ENCODE measurements at regions of chr1 and their contacts with region 1.

Region 1: DNA sequence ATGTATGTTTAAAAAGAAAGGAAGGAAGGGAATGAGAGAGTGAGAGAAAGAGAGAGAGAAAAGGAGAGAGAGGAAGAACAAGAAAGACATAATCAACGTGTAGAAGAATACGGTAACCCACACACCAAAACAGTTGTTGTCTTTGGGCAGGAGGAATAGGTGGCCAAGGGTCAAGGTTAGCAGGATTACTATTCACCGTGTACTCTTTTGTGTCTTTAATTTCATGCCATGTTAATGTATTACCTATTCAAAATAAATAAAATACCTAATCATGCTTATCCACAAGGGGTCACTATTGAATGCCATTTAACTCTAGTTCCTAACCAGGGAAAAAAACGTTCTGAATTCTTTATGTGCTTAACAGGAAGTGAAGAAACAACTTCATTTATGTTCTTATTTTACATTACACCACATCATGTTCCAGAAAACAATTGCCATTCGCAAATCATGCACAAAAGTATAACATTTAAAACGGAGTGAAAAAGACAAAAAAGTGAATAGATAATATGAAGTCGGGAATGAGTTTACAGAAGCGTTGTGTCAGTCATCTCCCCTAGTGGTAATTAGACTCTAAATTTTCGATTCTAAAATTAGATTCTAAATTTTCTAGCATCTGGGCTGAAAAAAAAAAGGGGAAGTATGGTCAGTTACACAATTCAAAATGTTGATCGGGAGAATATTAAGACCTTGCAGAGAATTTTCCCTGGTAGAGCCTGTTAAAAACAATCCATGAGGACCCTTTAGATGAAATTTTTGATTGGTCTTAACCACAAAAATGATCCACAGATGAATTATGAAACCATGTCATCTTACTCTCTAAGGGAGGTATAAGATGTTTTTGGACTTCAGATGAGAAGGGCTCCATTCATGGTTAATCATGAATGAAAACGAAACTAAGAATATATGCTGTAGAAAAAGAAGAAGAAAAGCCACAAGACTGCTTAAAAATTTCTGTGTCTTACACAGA is 700 bp upstream of the KMO start:
- DNase-seq: peak; percentile 91
- ATAC-seq: peak; percentile 68
- H3K4me3 ChIP-seq: peak overlapping the region; percentile 58 to 98 (median 78)
- H3K4me3 Mint-ChIP-seq: peak overlapping the region; percentile 92
- H3K27ac ChIP-seq: peak overlapping the region; percentile 87 to 96
- H3K27ac Mint-ChIP-seq: peak overlapping the region; percentile 96
- H3K4me1 ChIP-seq: peaks cover 29 to 41% of the 10 kb centered on the region in 2 donors
- H3K4me1 Mint-ChIP-seq: peaks cover 42% of the 10 kb centered on the region
- H3K27me3 ChIP-seq: no peaks in the 10 kb centered on the region
- H3K27me3 Mint-ChIP-seq: no peaks in the 10 kb centered on the region
- CTCF ChIP-seq: peak; percentile 93

Region 2: DNA sequence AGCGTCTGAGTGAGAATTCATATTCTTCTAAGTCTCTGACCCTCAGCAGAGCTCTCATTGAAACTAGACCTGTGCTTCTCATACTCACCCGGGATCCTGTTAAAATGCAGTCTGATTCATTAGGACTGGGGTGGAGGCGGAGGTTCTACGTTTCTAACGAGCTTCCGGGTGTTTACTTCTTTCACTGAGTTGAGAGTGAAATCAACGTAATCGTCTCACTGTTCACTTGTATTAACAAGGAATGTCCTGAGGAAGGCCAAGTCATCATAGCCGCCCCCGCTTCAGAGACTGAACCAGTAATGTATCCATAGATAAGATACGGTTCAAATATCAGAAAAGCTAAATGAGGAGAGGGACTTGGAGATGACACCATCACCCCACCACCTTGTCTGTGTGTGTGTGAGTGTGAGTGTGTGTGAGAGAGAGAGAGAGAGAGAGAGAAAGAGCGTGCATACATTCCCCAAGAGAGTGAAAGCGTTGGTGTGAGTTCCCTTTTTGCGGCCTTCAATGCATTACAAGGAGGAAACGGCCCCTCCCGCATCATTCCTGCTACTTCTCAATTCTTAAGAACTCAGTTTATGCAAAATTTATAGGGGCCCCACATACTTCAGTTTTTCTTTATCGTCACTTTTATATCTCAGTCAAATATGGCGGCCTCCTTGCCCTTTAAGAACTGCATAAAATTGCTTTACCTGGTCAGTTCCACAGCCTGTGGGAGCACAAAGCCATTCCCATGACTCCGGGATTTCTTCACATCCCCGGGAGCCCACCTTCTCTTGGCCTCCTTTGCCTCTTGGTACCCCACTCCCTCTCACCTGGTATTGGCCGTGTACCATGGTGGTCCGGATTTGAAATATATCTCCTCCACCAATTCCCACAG is 20.5 kb after region 1 on chr1:
- CTCF ChIA-PET with region 1: interaction called, 35 read pairs
- POLR2A ChIA-PET with region 1: interaction called, 43 read pairs
- intact Hi-C with region 1: loop called (anchors 1 kb)
- DNase-seq: peak; percentile 93
- ATAC-seq: peak; percentile 91
- H3K4me3 ChIP-seq: peak overlapping the region; percentile 52 to 77 (median 65)
- H3K4me3 Mint-ChIP-seq: peak overlapping the region; percentile 93
- H3K27ac ChIP-seq: peak overlapping the region; percentile 95 to 97
- H3K27ac Mint-ChIP-seq: peak overlapping the region; percentile 99
- H3K4me1 ChIP-seq: peaks cover 39 to 41% of the 10 kb centered on the region in 2 donors
- H3K4me1 Mint-ChIP-seq: peaks cover 51% of the 10 kb centered on the region
- H3K27me3 ChIP-seq: no peaks in the 10 kb centered on the region
- H3K27me3 Mint-ChIP-seq: peaks cover 3% of the 10 kb centered on the region
- CTCF ChIP-seq: no peak

Region 3: DNA sequence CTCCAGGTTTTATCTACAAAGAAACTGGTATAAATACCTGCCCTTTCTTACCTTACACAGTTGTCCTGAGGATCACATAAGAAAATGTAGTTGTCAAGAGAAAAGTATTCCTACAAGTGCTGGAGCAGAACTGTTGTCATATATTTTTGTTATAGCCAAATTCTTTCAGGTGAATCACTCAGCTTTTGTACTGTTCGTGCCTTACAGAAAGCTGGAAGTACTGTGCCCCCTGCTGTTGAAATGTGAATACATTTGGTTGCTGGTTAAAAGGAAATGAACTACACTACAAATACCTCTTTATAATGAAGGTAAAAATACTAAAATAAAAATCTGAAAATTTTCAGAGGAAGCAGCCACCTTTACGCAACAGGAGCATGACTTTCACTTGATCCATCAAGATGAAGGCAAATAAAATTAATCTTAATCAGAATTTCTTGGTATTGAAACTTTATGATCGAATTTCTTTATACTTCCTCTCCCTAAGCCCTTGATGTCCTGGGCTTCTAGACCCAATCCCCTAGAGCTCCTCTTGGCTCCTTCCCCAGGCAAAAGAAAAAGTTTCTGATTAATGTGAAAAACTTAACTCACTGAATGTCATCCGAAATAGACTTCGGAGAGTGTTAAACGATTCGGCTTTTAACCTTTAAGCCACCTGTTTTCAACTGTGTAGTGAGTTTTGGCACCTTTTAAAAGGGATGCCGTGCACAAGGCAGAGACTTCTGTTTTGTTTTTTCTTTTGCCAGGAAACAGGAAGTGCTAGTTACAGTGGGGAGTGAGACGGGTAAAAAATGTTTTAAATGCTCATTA is 96.2 kb after region 1 on chr1:
- CTCF ChIA-PET with region 1: interaction called, 13 read pairs
- POLR2A ChIA-PET with region 1: no interaction called
- intact Hi-C with region 1: loop called (anchors 1 kb)
- DNase-seq: peak; percentile 78
- ATAC-seq: peak; percentile 83
- H3K4me3 ChIP-seq: peak overlapping the region in 4 of 5 experiments; percentile 6 to 41 (median 17)
- H3K4me3 Mint-ChIP-seq: peak overlapping the region; percentile 63
- H3K27ac ChIP-seq: peak overlapping the region; percentile 66 to 71
- H3K27ac Mint-ChIP-seq: peak overlapping the region; percentile 88
- H3K4me1 ChIP-seq: peaks cover 14 to 25% of the 10 kb centered on the region in 2 donors
- H3K4me1 Mint-ChIP-seq: peaks cover 42% of the 10 kb centered on the region
- H3K27me3 ChIP-seq: no peaks in the 10 kb centered on the region
- H3K27me3 Mint-ChIP-seq: no peaks in the 10 kb centered on the region
- CTCF ChIP-seq: peak; percentile 82

Region 4: DNA sequence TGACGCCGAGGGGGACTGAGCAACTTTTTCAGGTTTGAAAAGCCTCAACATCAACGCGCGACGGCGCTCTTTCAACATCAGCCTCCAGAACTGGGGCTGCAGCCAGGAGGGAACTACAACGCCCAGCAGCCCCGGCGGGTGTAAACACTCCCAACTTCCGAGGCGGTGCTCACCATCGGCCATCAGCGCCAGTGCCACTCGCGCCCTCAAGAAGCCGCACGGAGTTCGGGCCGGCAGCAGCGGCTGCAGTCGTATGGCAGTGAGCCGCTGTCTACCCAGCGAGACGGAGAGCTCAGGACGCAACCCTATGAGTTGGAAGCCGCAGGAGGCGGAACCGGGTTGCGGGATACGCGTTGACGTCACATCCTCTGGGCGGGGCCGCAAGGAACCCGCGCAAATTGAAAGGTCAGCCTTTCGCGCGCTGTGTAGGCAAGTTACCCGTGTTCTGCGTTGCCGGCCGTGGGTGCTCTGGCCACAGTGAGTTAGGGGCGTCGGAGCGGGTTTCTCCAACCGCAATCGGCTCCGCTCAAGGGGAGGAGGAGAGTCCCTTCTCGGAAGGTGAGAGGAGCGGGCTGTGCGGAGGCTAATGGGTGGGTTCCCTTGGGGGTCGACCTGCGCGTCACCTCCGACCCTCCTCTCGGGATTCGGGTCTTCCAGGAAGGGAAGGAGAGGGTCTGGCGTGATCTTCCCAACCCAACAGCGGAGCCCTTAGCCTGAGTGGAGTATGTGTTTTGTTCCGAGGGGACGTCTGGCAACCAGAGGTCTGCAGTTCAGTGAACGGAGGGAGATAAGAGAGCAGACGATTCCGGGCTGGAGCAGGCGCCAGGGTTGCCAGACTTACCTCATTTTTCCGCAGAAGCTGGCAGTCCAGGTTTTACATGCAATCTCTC is 316.6 kb after region 1 on chr1 and contains the start of gene EXO1:
- CTCF ChIA-PET with region 1: interaction called, 4 read pairs
- POLR2A ChIA-PET with region 1: no interaction called
- intact Hi-C with region 1: loop called (anchors 1 kb)
- DNase-seq: peak; percentile 96
- ATAC-seq: peak; percentile 98
- H3K4me3 ChIP-seq: peak within 1 kb of the TSS; percentile 73 to 98 (median 95)
- H3K4me3 Mint-ChIP-seq: peak within 1 kb of the TSS; percentile 99
- H3K27ac ChIP-seq: peak within 1 kb of the TSS; percentile 92 to 97
- H3K27ac Mint-ChIP-seq: peak within 1 kb of the TSS; percentile 99
- H3K4me1 ChIP-seq: peaks cover 9 to 12% of the 10 kb centered on the region in 2 donors
- H3K4me1 Mint-ChIP-seq: peaks cover 17% of the 10 kb centered on the region
- H3K27me3 ChIP-seq: no peaks in the 10 kb centered on the region
- H3K27me3 Mint-ChIP-seq: no peaks in the 10 kb centered on the region
- CTCF ChIP-seq: peak; percentile 47
- total RNA-seq, gene EXO1: 1.2 and 1.6 TPM in 2 replicates

Region 5: DNA sequence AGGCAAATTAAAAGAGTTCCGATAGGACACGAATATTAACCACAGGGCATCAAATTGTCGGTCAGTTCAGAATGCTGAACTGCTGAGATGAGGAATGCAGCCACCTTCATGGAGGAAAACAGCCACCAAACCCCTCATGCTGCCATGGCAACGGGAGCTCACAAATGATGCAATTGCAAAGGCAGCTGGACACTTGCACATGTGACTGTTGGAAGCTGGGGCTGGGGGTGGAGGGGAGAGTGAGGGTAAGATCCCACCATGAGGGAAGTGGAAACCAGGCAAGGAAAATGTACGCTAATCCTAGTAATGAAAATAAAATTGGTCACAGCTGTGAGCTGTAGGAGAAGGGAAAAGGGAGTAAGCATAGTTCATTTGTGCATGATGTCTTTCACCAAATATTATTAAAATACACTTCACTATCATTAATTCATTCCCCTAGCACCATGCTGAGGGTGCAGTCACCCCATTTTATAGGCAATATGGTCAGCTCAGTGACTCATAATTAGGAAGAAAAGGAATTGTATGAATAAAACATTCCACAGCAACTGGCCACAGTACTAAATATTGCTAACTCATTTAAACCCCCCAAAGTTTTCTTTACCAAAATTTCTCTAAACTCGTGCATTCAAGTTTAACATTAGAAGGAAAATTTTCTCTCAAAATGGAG is 441.4 kb after region 1 on chr1:
- CTCF ChIA-PET with region 1: no interaction called
- POLR2A ChIA-PET with region 1: no interaction called
- intact Hi-C with region 1: no loop called
- DNase-seq: no peak
- ATAC-seq: no peak
- H3K4me3 ChIP-seq: no peak overlapping the region
- H3K4me3 Mint-ChIP-seq: no peak overlapping the region
- H3K27ac ChIP-seq: no peak overlapping the region
- H3K27ac Mint-ChIP-seq: no peak overlapping the region
- H3K4me1 ChIP-seq: no peaks in the 10 kb centered on the region
- H3K4me1 Mint-ChIP-seq: no peaks in the 10 kb centered on the region
- H3K27me3 ChIP-seq: peaks cover 0 to 3% (median 0%) of the 10 kb centered on the region in 4 experiments
- H3K27me3 Mint-ChIP-seq: peaks cover 6% of the 10 kb centered on the region
- CTCF ChIP-seq: no peak

Region 6: DNA sequence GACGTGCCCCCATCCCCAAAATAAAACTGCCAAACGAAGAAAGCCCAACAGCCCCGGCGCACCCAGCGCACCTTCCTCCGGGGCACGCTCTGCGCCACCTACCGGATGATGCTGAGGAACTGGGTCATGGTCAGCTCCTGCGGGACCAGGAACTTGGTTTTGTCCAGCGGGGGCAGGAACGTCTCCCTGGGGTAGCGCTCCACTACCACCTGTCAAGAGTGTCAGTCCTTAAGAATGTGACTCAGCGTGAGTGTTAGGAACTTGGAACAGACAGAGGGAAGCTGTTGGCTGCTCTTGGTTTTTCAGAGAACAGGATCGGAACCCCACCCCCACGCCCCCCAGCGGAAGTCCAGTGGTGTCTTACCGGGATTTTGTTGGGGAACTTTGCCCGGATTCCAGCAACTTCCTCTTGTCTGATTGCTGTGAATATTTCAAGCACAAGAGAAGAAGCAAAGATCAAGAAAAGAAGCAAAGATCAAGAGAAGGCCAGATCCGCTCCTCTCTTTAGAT is 467.0 kb after region 1 on chr1:
- CTCF ChIA-PET with region 1: interaction called, 13 read pairs
- POLR2A ChIA-PET with region 1: no interaction called
- intact Hi-C with region 1: loop called (anchors 1 kb)
- DNase-seq: peak; percentile 75
- ATAC-seq: peak; percentile 85
- H3K4me3 ChIP-seq: peak overlapping the region; percentile 30 to 70 (median 50)
- H3K4me3 Mint-ChIP-seq: peak overlapping the region; percentile 85
- H3K27ac ChIP-seq: no peak overlapping the region
- H3K27ac Mint-ChIP-seq: no peak overlapping the region
- H3K4me1 ChIP-seq: peaks cover 0 to 7% of the 10 kb centered on the region in 2 donors
- H3K4me1 Mint-ChIP-seq: peaks cover 5% of the 10 kb centered on the region
- H3K27me3 ChIP-seq: peaks cover 0 to 1% (median 0%) of the 10 kb centered on the region in 4 experiments
- H3K27me3 Mint-ChIP-seq: peaks cover 2% of the 10 kb centered on the region
- CTCF ChIP-seq: peak; percentile 77

Region 7: GRCh38 chr1:243325305-243325890 is 1793.9 kb after region 1 on chr1:
- CTCF ChIA-PET with region 1: no interaction called
- POLR2A ChIA-PET with region 1: no interaction called
- intact Hi-C with region 1: loop called (anchors 5 kb)
- DNase-seq: peak; percentile 69
- ATAC-seq: peak; percentile 49
- H3K4me3 ChIP-seq: no peak overlapping the region
- H3K4me3 Mint-ChIP-seq: no peak overlapping the region
- H3K27ac ChIP-seq: no peak overlapping the region
- H3K27ac Mint-ChIP-seq: no peak overlapping the region
- H3K4me1 ChIP-seq: no peaks in the 10 kb centered on the region
- H3K4me1 Mint-ChIP-seq: no peaks in the 10 kb centered on the region
- H3K27me3 ChIP-seq: no peaks in the 10 kb centered on the region
- H3K27me3 Mint-ChIP-seq: no peaks in the 10 kb centered on the region
- CTCF ChIP-seq: peak; percentile 98